ENCODE measurements at regions of chr11 and their contacts with region 1.

Region 1: DNA sequence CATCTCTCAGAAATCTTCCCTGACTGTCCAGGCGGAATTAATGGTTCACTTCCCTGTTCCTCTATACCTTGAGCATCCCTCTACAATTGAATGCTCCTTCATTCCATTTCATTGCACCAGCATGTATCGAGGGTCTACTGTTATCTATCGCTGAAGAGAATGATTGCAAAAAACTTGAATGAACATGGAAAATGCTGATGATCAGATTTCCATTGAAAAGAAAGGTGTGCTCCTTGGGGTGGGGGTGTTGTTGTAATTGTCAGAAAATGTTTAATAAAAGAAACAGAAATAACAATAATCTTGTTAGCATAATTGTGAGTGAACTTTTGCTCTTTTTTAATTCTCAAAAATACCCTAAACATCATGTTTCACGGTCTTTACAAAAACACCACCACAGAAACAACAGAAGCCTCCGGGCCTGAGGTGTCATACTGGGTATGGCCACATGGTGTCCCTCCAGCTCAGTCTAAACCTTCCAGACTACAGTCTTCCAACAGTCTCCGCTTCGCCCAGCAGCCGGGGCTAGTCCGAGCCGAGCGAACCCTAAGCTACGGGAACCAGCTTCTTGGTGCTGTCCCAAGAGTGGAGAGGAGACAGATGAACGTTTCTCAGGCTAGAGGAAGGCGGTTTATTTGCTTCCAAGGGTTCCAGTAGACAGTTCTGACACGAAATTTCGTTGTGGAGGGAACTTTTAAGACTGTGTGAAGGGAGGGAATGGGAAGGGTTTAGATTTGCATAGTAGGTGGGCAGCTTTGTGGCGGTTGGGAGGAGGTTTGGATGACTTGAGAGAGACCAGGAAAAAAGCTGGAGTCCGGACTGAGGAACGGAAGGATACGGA is 75.8 kb upstream of the ZBED5 start:
- DNase-seq: peak; percentile 97
- H3K4me3 ChIP-seq: peak overlapping the region; percentile 9 to 48 (median 44)
- H3K27ac ChIP-seq: peak overlapping the region; percentile 78 to 100 (median 98)
- H3K4me1 ChIP-seq: peaks cover 0 to 61% (median 55%) of the 10 kb centered on the region in 4 donors
- H3K27me3 ChIP-seq: no peaks in the 10 kb centered on the region
- CTCF ChIP-seq: peak; percentile 97 to 99 (median 99)
- EP300 ChIP-seq: no peak
- POLR2A ChIP-seq: peak in 1 of 2 donors; percentile 14

Region 2: GRCh38 chr11:10641177-10641911 is 292.3 kb before region 1 on chr11:
- intact Hi-C with region 1: no loop called
- DNase-seq: no peak
- H3K4me3 ChIP-seq: no peak overlapping the region
- H3K27ac ChIP-seq: peak overlapping the region; percentile 19 to 70 (median 64)
- H3K4me1 ChIP-seq: peaks cover 0 to 92% (median 63%) of the 10 kb centered on the region in 4 donors
- H3K27me3 ChIP-seq: no peaks in the 10 kb centered on the region
- CTCF ChIP-seq: no peak
- EP300 ChIP-seq: no peak
- POLR2A ChIP-seq: no peak

Region 3: DNA sequence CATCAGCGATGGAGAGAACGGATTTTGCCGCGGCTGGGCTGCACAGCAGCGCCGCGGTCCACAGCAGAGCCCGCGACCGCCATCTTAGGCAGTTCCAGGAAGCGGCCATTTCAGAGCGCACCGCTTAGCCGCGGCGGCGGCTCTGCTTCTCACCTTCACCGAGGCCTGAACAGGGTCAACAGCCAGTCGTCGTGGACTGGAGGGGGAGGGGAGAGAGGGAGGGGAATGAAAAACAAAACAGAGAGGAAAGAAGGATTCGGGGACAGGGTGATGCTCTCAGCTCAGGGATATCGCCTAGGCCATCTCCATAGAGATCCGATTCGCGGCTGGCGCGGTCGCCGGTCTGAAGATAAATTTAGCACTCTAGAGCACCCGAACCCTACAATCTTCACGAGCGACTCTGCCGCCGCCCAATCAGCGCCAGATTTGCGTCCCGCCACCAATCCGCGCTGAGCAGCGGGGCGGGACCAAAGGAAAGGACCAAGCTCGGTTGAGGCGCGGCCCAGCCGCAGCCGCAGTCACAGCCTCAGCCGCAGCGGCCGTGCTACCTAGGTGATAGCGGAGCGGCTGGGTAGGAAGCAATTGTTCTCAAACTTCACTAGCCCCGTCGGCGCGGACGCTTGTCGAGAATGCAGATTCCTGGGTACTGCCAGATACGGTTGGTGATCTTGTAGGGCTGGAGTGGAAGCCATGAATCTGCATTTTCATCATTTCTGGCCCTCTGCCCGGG is 75.8 kb before region 1 on chr11 and contains the start of gene ZBED5:
- intact Hi-C with region 1: loop called (anchors 1 kb)
- DNase-seq: peak; percentile 99
- H3K4me3 ChIP-seq: peak within 1 kb of the TSS; percentile 66 to 83 (median 72)
- H3K27ac ChIP-seq: peak within 1 kb of the TSS; percentile 96 to 99 (median 96)
- H3K4me1 ChIP-seq: peaks cover 0 to 52% (median 30%) of the 10 kb centered on the region in 4 donors
- H3K27me3 ChIP-seq: no peaks in the 10 kb centered on the region
- CTCF ChIP-seq: peak in 1 of 4 experiments; percentile 23
- EP300 ChIP-seq: no peak
- POLR2A ChIP-seq: peak; percentile 97 to 99
- total RNA-seq, gene ZBED5: 34.9 to 51.7 (median 42.6) TPM

Region 4: GRCh38 chr11:11009179-11009578 is 75.5 kb after region 1 on chr11:
- intact Hi-C with region 1: loop called (anchors 5 kb)
- DNase-seq: no peak
- H3K4me3 ChIP-seq: no peak overlapping the region
- H3K27ac ChIP-seq: no peak overlapping the region
- H3K4me1 ChIP-seq: peaks cover 0 to 14% (median 13%) of the 10 kb centered on the region in 4 donors
- H3K27me3 ChIP-seq: no peaks in the 10 kb centered on the region
- CTCF ChIP-seq: no peak
- EP300 ChIP-seq: no peak
- POLR2A ChIP-seq: no peak

Region 5: GRCh38 chr11:11149678-11150459 is 216.2 kb after region 1 on chr11:
- intact Hi-C with region 1: loop called (anchors 5 kb)
- DNase-seq: no peak
- H3K4me3 ChIP-seq: no peak overlapping the region
- H3K27ac ChIP-seq: no peak overlapping the region
- H3K4me1 ChIP-seq: peaks cover 0 to 28% (median 18%) of the 10 kb centered on the region in 4 donors
- H3K27me3 ChIP-seq: no peaks in the 10 kb centered on the region
- CTCF ChIP-seq: no peak
- EP300 ChIP-seq: no peak
- POLR2A ChIP-seq: no peak

Region 6: GRCh38 chr11:11621573-11622319 is 688.1 kb after region 1 on chr11 and contains the start of gene GALNT18:
- intact Hi-C with region 1: loop called (anchors 5 kb)
- DNase-seq: peak; percentile 97
- H3K4me3 ChIP-seq: peak within 1 kb of the TSS; percentile 64 to 85 (median 77)
- H3K27ac ChIP-seq: peak within 1 kb of the TSS; percentile 85 to 93 (median 88)
- H3K4me1 ChIP-seq: peaks cover 0 to 54% (median 49%) of the 10 kb centered on the region in 4 donors
- H3K27me3 ChIP-seq: no peaks in the 10 kb centered on the region
- CTCF ChIP-seq: peak in 2 of 4 experiments; percentile 50 to 54
- EP300 ChIP-seq: no peak
- POLR2A ChIP-seq: peak in 1 of 2 donors; percentile 73
- total RNA-seq, gene GALNT18: 34.9 to 48.6 (median 39.8) TPM

Region 7: GRCh38 chr11:11841723-11842420 is 908.2 kb after region 1 on chr11 and contains the start of gene USP47:
- intact Hi-C with region 1: loop called (anchors 5 kb)
- DNase-seq: peak; percentile 93
- H3K4me3 ChIP-seq: peak within 1 kb of the TSS; percentile 65 to 86 (median 82)
- H3K27ac ChIP-seq: peak within 1 kb of the TSS; percentile 94 to 99 (median 98)
- H3K4me1 ChIP-seq: peaks cover 2 to 44% (median 36%) of the 10 kb centered on the region in 4 donors
- H3K27me3 ChIP-seq: no peaks in the 10 kb centered on the region
- CTCF ChIP-seq: peak in 3 of 4 experiments; percentile 7 to 72 (median 63)
- EP300 ChIP-seq: peak in 1 of 4 donors; percentile 1
- POLR2A ChIP-seq: peak; percentile 65 to 84
- total RNA-seq, gene USP47: 84.9 to 105 (median 103) TPM